ENCODE measurements at regions of chr1 and their contacts with region 1.

Region 1: GRCh38 chr1:48061162-48062136 is 64.3 kb upstream of the TRABD2B start:
- DNase-seq: no peak

Region 2: GRCh38 chr1:47951545-47952234 is 109.8 kb before region 1 on chr1:
- intact Hi-C with region 1: loop called (anchors 5 kb)
- DNase-seq: no peak

Region 3: GRCh38 chr1:47997289-47998200 is 63.9 kb before region 1 on chr1 and contains the start of gene TRABD2B:
- intact Hi-C with region 1: loop called (anchors 1 kb)
- DNase-seq: peak; percentile 91
- total RNA-seq, gene TRABD2B: 3.4 TPM

Region 4: GRCh38 chr1:48182441-48182840 is 121.0 kb after region 1 on chr1:
- intact Hi-C with region 1: no loop called
- DNase-seq: no peak

Measured in cardiac septum (tissue), 1 donor.